ENCODE measurements at regions of chr17 and their contacts with region 1.

Region 1: DNA sequence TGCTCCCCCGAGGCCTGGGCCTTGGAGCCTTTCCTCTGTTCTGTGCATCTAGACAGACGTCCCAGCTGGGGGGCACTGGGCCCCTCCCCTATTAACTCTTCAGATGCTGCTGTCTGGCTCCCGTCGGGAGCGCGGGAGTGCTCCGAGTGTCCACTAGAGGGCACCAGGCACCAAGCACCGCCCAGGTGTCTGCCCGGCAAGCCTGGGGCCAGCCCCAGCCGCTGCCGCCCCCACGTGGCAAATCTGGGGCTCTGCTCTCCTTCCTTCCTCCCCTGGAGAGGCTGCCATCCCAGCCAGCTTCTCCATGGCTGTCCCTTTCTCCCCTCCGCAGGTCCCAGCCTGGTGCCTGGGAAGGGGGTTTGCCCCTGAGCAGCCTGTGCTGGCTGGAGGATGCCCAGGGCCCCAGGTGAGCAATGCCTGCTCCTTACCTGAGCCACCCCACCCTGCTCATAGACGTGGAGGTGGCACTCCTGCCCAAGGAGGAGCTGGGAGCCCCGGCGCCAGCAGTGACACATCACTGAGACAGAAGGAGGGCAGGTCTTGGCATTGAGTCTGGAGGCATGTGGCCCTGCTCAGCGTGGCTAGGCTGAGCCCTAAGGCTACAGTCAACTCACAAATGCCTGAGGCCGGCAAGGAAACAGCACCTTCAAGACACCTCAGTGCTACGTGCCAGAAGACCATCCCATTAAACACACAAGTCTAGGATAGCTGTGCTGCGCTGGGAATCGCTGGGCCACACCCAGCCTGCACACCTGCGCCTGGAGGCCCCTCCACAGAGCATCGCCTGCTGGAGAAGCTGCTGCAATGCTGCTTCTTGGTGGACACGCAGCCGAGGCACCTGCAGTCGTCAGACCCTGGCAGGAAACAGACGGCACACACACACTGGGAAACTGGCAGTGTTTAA is 19.7 kb downstream of the TMEM235 start:
- DNase-seq: peak; percentile 68 to 89 (median 83)
- ATAC-seq: peak; percentile 35
- H3K4me3 ChIP-seq: peak overlapping the region; percentile 23 to 51
- H3K4me3 Mint-ChIP-seq: peak overlapping the region; percentile 86
- H3K27ac ChIP-seq: peak overlapping the region in 1 of 2 experiments; percentile 56
- H3K27ac Mint-ChIP-seq: peak overlapping the region; percentile 99
- H3K4me1 ChIP-seq: peaks cover 49% of the 10 kb centered on the region
- H3K4me1 Mint-ChIP-seq: peaks cover 48% of the 10 kb centered on the region
- H3K27me3 ChIP-seq: no peaks in the 10 kb centered on the region
- H3K27me3 Mint-ChIP-seq: no peaks in the 10 kb centered on the region
- CTCF ChIP-seq: peak; percentile 99

Region 2: GRCh38 chr17:78019367-78019975 is 231.7 kb before region 1 on chr17:
- CTCF ChIA-PET with region 1: interaction called, 22 read pairs
- POLR2A ChIA-PET with region 1: no interaction called
- intact Hi-C with region 1: no loop called
- DNase-seq: peak in 2 of 9 experiments; percentile 43 to 56
- ATAC-seq: peak; percentile 40
- H3K4me3 ChIP-seq: no peak overlapping the region
- H3K4me3 Mint-ChIP-seq: no peak overlapping the region
- H3K27ac ChIP-seq: peak overlapping the region in 1 of 2 experiments; percentile 14
- H3K27ac Mint-ChIP-seq: peak overlapping the region; percentile 52
- H3K4me1 ChIP-seq: peaks cover 12% of the 10 kb centered on the region
- H3K4me1 Mint-ChIP-seq: peaks cover 33% of the 10 kb centered on the region
- H3K27me3 ChIP-seq: no peaks in the 10 kb centered on the region
- H3K27me3 Mint-ChIP-seq: no peaks in the 10 kb centered on the region
- CTCF ChIP-seq: peak; percentile 64

Region 3: DNA sequence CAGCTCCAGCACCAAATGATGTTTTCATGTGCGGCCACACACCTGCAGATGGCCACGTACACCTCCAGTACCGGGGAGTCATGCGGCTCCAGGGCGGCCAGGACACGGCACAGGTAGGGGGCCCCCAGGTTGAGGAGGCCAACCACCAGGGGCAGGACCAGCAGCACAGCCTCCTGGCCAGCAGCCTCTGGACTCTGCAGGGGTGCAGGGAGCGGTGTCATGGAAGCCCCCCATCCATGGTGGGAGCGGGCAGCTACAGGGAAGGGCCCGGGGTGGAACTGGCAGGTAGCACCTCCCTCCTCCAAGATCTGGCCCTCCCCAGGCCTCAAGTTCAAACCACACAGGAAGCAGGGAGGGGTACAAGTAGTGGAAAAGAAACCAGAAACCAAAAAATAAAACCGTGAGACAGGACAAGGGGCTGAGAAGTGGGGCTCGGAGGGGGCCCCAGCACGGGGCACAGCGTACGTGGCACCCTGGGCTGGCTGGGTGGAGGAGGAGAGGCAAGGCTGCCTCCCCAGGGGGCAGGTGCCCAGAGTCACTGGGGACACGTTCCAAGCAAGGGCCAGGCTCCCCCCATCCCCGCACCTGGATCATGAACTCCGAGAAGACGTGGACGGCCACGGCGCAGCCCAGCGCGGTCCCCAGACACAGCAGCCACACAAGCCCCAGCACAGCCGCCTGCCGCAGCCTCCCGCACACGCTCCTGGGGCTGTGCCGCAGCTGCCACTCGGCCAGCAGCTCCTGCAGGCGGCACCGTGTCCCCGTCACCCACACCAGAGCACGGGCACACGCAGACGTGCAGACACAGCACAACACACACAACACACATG is 130.0 kb before region 1 on chr17:
- CTCF ChIA-PET with region 1: interaction called, 4 read pairs
- POLR2A ChIA-PET with region 1: no interaction called
- intact Hi-C with region 1: loop called in 1 of 2 experiments (anchors 2 kb)
- DNase-seq: peak in 6 of 9 experiments; percentile 61 to 84 (median 75)
- ATAC-seq: peak; percentile 51
- H3K4me3 ChIP-seq: peak overlapping the region; percentile 36 to 51
- H3K4me3 Mint-ChIP-seq: peak overlapping the region; percentile 83
- H3K27ac ChIP-seq: peak overlapping the region; percentile 47 to 75
- H3K27ac Mint-ChIP-seq: peak overlapping the region; percentile 93
- H3K4me1 ChIP-seq: peaks cover 91% of the 10 kb centered on the region
- H3K4me1 Mint-ChIP-seq: peaks cover 70% of the 10 kb centered on the region
- H3K27me3 ChIP-seq: no peaks in the 10 kb centered on the region
- H3K27me3 Mint-ChIP-seq: no peaks in the 10 kb centered on the region
- CTCF ChIP-seq: no peak

Region 4: GRCh38 chr17:78168242-78168902 is 82.8 kb before region 1 on chr17 and contains the start of gene SYNGR2:
- CTCF ChIA-PET with region 1: interaction called, 3 read pairs
- POLR2A ChIA-PET with region 1: no interaction called
- intact Hi-C with region 1: loop called (anchors 1 to 10 kb)
- DNase-seq: peak; percentile 74 to 93 (median 86)
- ATAC-seq: peak; percentile 89
- H3K4me3 ChIP-seq: peak within 1 kb of the TSS; percentile 52 to 59
- H3K4me3 Mint-ChIP-seq: peak within 1 kb of the TSS; percentile 69
- H3K27ac ChIP-seq: peak within 1 kb of the TSS; percentile 52 to 73
- H3K27ac Mint-ChIP-seq: peak within 1 kb of the TSS; percentile 79
- H3K4me1 ChIP-seq: peaks cover 30% of the 10 kb centered on the region
- H3K4me1 Mint-ChIP-seq: peaks cover 36% of the 10 kb centered on the region
- H3K27me3 ChIP-seq: no peaks in the 10 kb centered on the region
- H3K27me3 Mint-ChIP-seq: no peaks in the 10 kb centered on the region
- CTCF ChIP-seq: no peak
- total RNA-seq, gene SYNGR2: 36.4 to 36.7 TPM

Region 5: GRCh38 chr17:78272181-78272913 is 21.2 kb after region 1 on chr17:
- CTCF ChIA-PET with region 1: interaction called, 8 read pairs
- POLR2A ChIA-PET with region 1: no interaction called
- intact Hi-C with region 1: loop called in 1 of 2 experiments (anchors 1 kb)
- DNase-seq: peak in 6 of 9 experiments; percentile 34 to 89 (median 67)
- ATAC-seq: peak; percentile 90
- H3K4me3 ChIP-seq: no peak overlapping the region
- H3K4me3 Mint-ChIP-seq: peak overlapping the region; percentile 42
- H3K27ac ChIP-seq: peak overlapping the region in 1 of 2 experiments; percentile 3
- H3K27ac Mint-ChIP-seq: peak overlapping the region; percentile 93
- H3K4me1 ChIP-seq: peaks cover 42% of the 10 kb centered on the region
- H3K4me1 Mint-ChIP-seq: peaks cover 37% of the 10 kb centered on the region
- H3K27me3 ChIP-seq: peaks cover 0 to 3% of the 10 kb centered on the region in 2 experiments
- H3K27me3 Mint-ChIP-seq: no peaks in the 10 kb centered on the region
- CTCF ChIP-seq: no peak

Region 6: DNA sequence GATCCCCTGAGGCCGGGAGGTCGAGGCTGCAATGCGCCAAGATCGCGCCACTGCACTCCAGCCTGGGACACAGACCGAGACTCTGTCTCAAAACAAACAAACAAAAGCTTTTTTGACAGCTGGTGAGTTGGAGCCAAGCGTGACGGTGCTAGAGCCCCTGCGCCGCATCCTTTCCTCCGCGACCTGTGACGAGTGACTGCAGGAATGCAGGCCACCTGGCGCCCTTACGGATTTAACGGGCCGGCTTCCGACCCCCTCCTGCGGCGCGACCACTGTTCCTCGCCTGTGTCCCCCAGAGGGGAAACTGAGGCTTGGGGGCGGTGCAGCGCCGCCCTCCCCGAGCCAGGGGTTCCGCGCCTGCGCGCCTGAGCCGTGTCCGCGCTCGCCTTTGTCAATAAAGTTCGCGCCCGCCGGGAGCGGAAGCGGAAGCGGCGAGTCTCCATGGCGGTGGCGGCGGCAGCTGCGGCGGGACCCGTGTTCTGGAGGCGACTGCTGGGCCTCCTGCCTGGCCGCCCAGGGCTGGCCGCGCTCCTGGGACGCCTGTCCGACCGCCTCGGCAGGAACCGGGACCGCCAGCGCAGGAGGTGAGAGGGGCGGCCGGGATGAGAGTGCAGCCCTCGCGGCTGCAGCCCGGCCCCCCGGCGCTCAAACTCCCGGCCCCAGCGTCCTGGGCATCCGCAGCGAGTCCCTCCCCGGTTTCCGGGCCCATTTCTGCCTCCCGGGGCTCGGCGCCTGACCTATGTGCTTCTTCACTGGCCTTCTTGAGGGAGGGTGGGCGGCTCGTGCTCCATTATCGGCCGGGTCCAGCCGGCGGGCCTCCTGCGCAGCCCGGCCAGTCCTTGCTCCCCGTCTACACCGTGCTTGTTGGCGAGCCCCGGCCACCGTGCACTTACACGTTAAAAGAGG is 127.3 kb after region 1 on chr17 and contains the start of gene PGS1:
- CTCF ChIA-PET with region 1: interaction called, 5 read pairs
- POLR2A ChIA-PET with region 1: interaction called, 3 read pairs
- intact Hi-C with region 1: loop called in 1 of 2 experiments (anchors 5 kb)
- DNase-seq: peak; percentile 60 to 92 (median 83)
- ATAC-seq: peak; percentile 51
- H3K4me3 ChIP-seq: peak within 1 kb of the TSS; percentile 70 to 91
- H3K4me3 Mint-ChIP-seq: peak within 1 kb of the TSS; percentile 95
- H3K27ac ChIP-seq: peak within 1 kb of the TSS; percentile 64 to 70
- H3K27ac Mint-ChIP-seq: peak within 1 kb of the TSS; percentile 88
- H3K4me1 ChIP-seq: peaks cover 50% of the 10 kb centered on the region
- H3K4me1 Mint-ChIP-seq: peaks cover 43% of the 10 kb centered on the region
- H3K27me3 ChIP-seq: no peaks in the 10 kb centered on the region
- H3K27me3 Mint-ChIP-seq: no peaks in the 10 kb centered on the region
- CTCF ChIP-seq: no peak
- total RNA-seq, gene PGS1: 34.6 to 36.3 TPM

Region 7: DNA sequence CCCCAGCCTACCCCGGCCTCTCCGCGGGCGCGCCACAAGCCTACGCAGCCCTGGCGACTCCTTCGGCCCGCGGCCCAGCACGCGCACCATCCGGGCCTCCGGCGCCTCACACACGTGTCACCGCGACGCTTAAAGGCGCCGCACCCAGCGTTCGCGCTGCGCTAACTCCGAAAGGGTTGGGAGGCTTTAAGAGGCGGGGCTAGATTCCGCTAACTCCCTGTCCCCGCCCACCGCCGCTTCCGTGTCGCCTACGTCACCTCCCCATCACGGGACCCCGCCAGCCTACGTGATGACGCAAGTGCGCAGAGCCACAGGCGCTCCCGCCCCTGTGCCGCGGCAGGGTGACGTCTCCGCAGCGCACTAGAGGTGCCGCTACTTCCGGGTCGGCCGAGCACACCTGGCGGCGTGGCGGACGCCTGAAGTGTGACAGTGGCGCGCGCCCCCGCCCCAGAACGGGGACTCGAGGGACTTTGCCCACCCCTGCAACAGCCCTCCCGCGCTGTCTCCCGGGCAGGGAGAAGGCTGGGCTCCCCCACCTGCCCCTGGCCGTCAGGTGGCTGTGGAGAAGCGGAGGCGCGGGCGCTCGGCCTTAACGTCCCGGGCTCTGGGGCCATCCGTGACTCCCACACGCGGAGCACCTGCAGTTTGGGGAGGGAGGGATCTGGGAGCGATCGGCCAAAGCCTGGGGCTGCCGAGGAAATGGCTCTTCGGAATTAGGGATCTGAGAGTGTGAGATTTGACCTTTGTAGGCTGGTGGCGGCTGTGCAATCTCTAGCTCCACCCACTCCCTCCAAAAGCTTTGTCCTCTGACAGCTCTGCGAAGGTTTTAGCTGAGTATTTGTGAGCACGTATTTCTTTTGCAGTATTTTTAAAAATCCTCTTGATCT is 589.8 kb after region 1 on chr17 and contains the start of gene USP36:
- CTCF ChIA-PET with region 1: no interaction called
- POLR2A ChIA-PET with region 1: no interaction called
- intact Hi-C with region 1: loop called (anchors 2 to 5 kb)
- DNase-seq: peak; percentile 99 to 100 (median 100)
- ATAC-seq: peak; percentile 84
- H3K4me3 ChIP-seq: peak within 1 kb of the TSS; percentile 70 to 86
- H3K4me3 Mint-ChIP-seq: peak within 1 kb of the TSS; percentile 99
- H3K27ac ChIP-seq: peak within 1 kb of the TSS; percentile 98
- H3K27ac Mint-ChIP-seq: peak within 1 kb of the TSS; percentile 97
- H3K4me1 ChIP-seq: peaks cover 32% of the 10 kb centered on the region
- H3K4me1 Mint-ChIP-seq: peaks cover 49% of the 10 kb centered on the region
- H3K27me3 ChIP-seq: no peaks in the 10 kb centered on the region
- H3K27me3 Mint-ChIP-seq: no peaks in the 10 kb centered on the region
- CTCF ChIP-seq: no peak
- total RNA-seq, gene USP36: 755 to 805 TPM